Activated naive CD4-positive, alpha-beta T cell treated with anti-CD3 and anti-CD28 coated beads for 36 hours (primary cell): ENCODE measurements at regions of chr12 and their contacts with region 1.

Region 1: DNA sequence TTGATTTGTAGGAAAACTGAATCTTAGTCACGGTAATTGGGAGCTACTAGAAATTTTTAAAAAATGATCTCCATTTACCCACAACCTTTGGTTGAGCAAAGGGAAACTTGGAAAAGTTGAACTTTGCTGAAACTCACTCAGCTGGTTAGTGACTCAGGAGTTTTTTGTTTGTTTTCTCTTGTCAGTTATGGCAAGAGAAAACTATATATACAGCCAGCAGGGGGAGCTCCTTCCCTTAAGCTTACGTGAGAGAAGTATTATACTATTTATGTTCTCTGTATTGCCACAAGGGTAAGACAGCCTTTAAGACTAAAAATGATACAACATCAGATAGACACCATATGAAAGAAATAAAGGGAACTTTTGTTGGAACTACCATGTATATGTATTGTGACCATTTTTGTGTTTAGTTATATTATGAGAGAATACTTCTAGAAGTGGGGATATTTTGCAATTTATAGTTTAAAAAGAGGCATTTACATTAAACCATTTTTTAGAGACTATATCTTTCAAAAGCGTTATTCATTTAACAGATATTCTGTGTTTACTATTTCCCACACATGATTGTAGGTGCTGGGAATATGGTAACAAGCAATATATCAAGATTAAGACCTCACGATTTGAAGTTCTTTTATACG is 28.1 kb upstream of the TBC1D30 start:
- DNase-seq: peak; percentile 76
- H3K4me3 Mint-ChIP-seq: no peak overlapping the region
- H3K27ac Mint-ChIP-seq: no peak overlapping the region
- H3K4me1 Mint-ChIP-seq: no peaks in the 10 kb centered on the region
- H3K27me3 Mint-ChIP-seq: peaks cover 6% of the 10 kb centered on the region

Region 2: DNA sequence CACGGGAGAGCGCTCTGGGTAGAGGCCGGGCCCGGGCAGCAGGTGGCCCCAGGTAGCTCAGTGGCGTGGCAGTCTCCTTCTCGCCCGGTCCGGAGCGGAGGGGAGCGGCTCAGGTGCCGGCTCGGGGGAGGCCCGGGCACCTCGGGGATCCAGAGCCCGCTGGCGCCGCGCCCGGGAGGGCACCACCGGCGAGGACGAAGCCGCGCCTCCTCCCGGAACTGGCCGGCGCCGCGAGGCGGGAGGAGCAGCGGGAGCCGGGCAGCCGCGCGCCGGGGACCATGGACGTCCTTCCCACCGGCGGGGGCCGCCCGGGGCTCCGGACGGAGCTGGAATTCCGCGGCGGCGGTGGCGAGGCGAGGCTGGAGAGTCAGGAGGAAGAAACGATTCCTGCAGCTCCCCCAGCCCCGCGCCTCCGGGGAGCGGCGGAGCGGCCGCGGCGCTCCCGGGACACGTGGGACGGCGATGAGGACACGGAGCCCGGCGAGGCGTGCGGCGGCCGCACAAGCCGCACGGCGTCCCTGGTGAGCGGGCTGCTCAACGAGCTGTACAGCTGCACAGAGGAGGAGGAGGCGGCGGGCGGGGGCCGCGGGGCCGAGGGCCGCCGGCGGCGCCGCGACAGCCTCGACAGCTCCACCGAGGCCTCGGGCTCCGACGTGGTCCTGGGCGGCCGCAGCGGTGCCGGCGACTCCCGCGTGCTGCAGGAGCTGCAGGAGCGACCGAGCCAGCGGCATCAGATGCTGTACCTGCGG is 15.6 kb before region 1 on chr12:
- CTCF ChIA-PET with region 1: interaction called, 22 read pairs
- intact Hi-C with region 1: no loop called
- DNase-seq: peak; percentile 21
- H3K4me3 Mint-ChIP-seq: peak overlapping the region; percentile 74
- H3K27ac Mint-ChIP-seq: no peak overlapping the region
- H3K4me1 Mint-ChIP-seq: peaks cover 12% of the 10 kb centered on the region
- H3K27me3 Mint-ChIP-seq: peaks cover 65% of the 10 kb centered on the region

Region 3: DNA sequence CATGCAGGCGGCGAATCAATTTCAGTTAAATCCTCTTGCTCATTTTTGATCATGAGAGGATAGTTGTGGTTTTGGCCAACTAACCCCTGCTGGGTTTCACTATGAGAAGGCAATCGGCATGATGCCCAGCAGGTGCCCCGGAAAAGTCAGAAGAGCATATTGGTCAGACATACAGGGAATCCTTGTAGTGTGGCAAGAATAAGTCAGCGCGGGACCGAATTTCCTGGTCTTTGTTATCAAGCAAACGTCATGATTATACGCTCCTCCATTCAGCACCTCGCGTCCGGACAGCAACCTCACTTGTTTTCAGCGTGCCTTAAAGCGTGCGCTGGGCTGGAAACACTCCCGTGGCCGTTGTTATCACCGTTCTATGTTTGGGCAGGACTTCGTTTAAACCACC is 29.9 kb after region 1 on chr12:
- CTCF ChIA-PET with region 1: interaction called, 9 read pairs
- intact Hi-C with region 1: loop called (anchors 2 kb)
- DNase-seq: peak; percentile 83
- H3K4me3 Mint-ChIP-seq: peak overlapping the region; percentile 23
- H3K27ac Mint-ChIP-seq: no peak overlapping the region
- H3K4me1 Mint-ChIP-seq: peaks cover 15% of the 10 kb centered on the region
- H3K27me3 Mint-ChIP-seq: peaks cover 45% of the 10 kb centered on the region

Region 4: DNA sequence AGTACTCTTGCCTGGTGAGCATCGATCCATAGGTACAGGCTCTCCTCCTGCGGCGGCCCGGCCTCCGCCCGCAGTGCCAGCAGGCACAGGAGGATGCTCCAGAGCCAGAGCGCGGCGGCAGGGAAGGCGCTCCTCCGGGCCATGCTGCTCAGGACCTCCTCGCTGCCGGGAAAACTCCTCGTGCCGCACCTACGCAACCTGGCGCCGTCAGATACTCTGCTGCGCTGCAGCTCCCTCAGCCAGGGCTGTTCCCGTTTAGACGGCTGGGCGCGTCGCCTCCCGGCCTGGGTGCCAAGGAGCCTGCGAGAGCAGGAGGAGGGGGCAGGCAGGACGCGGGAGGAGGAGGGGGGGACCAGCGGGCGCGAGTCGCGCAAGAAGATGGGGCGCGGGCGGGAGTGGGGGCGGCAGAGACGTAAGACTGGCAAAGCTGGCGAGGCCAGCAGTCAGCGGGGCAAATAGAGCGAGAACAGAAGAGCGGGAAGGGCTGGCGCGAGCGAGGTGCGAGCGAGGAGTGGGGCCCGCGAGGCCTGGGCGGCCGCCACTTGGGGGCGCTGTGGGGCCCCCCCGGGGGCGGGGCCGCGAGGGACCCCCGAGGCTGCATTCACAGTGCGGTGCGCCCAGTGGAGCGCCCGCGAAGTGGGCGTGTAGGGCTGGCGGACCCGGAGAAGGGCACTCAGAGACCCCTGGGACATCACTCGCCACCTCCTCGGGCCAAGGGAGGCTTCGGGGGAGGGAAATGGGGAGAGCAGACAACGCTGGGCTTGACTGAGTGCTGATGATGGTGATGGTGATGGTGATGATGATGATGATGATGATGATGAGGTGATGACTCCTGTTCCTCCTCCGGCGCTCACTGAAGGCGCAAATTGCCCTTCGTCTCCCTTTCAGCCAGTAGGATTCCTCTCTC is 325.0 kb after region 1 on chr12 and contains the start of gene WIF1:
- CTCF ChIA-PET with region 1: interaction called, 9 read pairs
- intact Hi-C with region 1: loop called (anchors 1 kb)
- DNase-seq: peak; percentile 28
- H3K4me3 Mint-ChIP-seq: peak within 1 kb of the TSS; percentile 41
- H3K27ac Mint-ChIP-seq: no peak within 1 kb of the TSS
- H3K4me1 Mint-ChIP-seq: peaks cover 3% of the 10 kb centered on the region
- H3K27me3 Mint-ChIP-seq: peaks cover 24% of the 10 kb centered on the region
- total RNA-seq, gene WIF1: 0.20 TPM in 1 of 2 experiments, not detected in the other